Caki2 (cell line): ENCODE measurements at regions of chr5 and their contacts with region 1.

Region 1: DNA sequence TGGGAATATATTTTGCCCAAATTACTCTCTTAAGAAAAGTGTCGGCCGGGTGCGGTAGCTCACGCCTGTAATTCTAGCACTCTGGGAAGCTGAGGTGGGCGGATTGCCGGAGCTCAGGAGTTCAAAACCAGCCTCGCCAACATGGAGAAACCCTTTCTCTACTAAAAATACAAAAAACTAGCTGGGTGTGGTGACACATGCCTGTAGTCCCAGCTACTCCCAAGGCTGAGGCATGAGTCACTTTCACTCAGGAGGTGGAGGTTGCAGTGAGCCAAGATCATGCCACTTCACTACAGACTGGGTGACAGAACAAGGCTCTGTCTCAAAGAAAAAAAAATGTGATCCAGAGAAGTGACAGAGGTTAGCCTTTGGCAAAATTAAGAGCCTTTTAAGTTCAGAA is 26.4 kb upstream of the TMEM171 start:
- DNase-seq: peak; percentile 52

Region 2: DNA sequence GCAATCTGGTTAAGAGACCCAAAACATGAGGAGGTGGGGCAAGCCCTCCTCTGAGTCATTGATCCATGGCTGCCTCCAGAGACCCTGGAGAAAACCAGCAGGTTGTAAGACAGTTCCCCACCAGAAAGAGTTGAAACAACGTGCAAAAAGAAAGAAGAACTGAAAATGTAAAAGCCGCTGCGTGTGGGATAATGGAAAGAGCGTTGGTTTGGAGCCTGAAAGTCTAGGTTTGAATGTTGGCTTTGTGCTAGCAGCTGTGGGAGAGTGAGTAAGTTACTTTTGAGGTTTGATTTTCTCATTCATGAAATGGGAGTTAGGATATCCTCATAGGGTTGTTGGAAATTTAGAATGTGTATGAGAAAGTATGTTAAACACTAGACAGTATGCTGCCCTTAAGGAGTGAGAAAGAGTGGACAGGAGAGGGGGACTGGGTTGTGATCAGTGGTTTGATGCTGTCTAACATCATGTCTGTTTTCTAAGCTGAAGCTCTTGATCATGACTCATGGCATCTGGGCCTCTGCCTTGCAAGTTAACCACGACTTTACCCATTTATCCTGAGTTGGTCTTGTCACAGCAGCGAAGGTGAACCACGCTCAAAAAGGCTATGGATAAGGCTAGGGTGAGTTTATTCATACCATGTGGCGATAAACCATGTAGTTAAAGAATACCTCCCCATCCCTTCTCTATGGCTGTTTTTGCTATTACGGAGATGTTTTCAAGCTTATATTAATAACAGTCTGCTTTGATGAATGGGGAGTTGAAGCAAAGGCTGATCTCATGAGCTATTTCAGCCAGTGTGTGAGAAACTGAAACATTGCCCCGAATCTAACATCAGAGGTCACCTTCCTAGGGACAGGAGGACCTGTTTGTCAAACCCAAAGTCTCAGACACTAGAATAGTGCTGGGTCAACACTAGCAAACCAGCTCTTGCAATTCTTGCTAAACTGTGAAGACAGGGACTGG is 628.1 kb before region 1 on chr5:
- in situ Hi-C with region 1: no loop called
- DNase-seq: no peak

Region 3: GRCh38 chr5:72917371-72917776 is 176.6 kb before region 1 on chr5:
- in situ Hi-C with region 1: loop called (anchors 10 kb)
- DNase-seq: peak; percentile 7

Region 4: GRCh38 chr5:73160239-73160671 is 66.3 kb after region 1 on chr5:
- in situ Hi-C with region 1: no loop called
- DNase-seq: no peak

Region 5: GRCh38 chr5:73189871-73190376 is 96.0 kb after region 1 on chr5:
- in situ Hi-C with region 1: loop called (anchors 25 kb)
- DNase-seq: no peak